ENCODE measurements at regions of chr21 and their contacts with region 1.

Region 1: GRCh38 chr21:36437745-36438128 is 42.2 kb downstream of the CLDN14 start:
- DNase-seq: peak; percentile 49
- H3K4me3 ChIP-seq: no peak overlapping the region
- H3K27ac ChIP-seq: no peak overlapping the region
- H3K27me3 ChIP-seq: no peaks in the 10 kb centered on the region
- CTCF ChIP-seq: no peak

Region 2: DNA sequence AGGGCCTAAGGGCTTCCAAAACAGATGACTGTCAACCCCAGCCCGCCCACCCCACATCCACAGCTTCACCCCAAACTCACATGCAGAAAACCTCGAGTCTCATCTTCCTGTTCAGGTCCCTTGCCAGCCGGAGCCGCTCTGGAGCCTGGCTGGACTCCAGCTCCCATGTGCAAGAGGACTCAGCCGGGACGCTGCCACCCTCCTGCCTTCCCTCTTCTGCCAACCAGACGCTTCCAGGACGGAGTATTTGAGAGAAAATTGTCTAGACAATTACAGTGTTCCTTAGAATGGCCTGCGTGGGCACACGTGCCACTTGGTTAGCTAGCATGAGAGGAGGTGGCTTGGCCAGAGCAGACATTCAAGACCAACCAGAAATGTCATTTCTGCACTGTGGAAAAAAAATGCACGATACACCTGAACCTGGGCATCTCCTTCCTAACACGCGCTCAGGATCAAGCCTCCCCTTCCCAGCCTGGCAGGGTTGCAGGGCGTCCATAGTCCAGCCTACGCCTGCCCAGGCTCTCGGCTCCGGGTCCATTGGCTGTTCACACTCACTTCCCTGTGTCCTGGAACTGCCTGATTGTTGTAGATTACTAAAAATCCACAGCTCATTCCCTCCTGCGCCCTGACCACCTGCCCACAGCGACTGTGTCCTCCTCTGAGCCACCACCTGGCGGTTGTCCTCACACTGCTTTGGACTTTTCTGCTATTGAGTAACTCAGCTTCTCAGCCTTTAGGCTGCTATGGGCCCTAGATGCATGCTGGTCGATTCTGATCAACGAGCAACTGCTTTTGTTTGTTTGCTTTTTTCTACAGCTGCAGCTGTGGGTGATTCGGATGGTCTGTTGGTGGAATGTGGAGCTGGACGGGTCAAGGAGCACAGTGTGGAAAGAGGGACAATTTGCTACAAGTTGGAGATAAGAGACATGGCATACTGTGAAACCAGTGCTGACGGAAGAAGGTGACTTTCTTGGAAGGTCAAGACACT is 42.0 kb after region 1 on chr21 and contains the start of gene CLDN14:
- CTCF ChIA-PET with region 1: no interaction called
- POLR2A ChIA-PET with region 1: interaction called, 10 read pairs
- DNase-seq: no peak
- H3K4me3 ChIP-seq: no peak within 1 kb of the TSS
- H3K27ac ChIP-seq: no peak within 1 kb of the TSS
- H3K27me3 ChIP-seq: no peaks in the 10 kb centered on the region
- CTCF ChIP-seq: no peak
- polyA plus RNA-seq, gene CLDN14: not detected in 2 replicates

Measured in AG04450 (cell line).